Endothelial cell of umbilical vein (primary cell): ENCODE measurements at regions of chr21 and their contacts with region 1.

Region 1: DNA sequence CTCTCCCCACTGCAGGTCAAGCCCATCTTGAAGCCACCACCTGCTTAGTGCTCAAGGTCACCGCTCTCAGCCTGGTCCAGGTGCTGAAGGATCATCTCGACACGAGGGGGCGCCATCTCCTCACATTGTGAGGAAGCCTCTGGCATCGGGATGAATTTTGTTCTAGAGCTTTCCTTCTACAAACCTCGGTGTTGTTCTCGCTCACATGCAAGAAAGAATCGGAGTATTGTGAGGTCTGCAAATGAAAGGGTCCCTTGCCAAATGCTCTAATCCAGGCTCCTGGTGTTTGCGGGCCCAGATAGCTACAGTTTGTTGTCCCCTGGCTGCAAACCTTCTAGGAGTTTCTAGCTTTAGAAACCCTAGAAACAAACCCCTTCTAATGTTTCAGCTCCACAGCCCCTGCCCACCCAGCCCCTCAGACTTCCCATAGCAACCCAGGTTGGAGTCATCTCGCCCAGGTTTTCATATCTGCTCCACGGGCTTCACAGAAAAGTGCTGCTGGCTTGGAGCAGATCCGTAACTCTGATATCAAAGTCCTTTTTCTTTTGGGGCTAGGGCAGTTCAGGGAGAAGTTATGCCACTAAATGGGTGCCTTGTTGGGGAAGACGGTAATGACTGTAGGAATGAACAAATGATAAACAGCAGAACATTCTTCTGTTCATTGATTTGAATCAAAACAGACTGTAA is 8.6 kb upstream of the ATP5PO start:
- DNase-seq: peak; percentile 78
- H3K4me3 ChIP-seq: no peak overlapping the region
- H3K27ac ChIP-seq: no peak overlapping the region
- H3K4me1 ChIP-seq: no peaks in the 10 kb centered on the region
- H3K27me3 ChIP-seq: peaks cover 5 to 6% of the 10 kb centered on the region in 2 experiments
- CTCF ChIP-seq: peak; percentile 85 to 86
- POLR2A ChIP-seq: no peak

Region 2: DNA sequence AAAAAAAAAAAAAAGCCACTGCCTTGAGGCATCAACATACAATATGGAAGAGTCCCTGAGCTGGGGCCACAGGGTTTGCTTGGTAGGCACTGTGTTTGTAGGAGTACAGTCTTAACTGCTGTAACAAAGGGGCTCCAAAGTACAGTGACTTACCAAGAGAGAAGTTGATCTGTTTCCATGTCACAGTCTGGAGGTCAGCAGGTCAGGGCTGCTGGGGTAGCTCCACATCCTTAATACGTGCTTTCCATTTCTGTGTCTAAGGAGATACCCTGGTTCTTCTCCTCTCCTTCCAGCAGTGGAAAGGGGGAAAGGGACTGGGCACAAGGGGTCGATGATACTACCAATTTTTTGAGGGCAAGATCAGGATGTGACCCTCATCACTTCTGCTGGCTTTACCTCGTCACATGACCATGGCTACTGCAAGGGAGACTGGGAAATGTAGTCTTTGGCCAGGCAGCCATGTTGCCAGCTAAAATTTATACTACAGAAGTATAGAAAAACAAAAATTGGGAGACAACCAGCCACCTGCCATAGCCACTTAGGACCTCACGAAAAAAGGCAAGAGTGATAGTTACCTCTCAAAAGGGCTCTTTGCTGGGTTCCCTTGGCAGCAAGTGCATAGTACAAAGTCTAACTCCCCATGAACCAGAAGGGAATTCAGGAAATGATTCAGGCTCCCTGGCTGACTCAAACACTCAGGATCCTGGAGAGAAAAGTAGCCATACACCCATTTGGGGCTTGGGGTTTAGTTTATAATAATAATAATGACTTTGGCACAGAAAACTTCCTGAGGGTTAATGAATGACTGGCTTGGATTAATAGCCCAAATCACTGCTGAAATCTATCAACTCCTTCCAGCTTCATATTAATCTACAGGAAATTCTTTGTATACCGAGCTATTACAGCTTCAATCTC is 44.1 kb after region 1 on chr21:
- CTCF ChIA-PET with region 1: interaction called, 38 read pairs
- POLR2A ChIA-PET with region 1: interaction called, 3 read pairs
- dilution Hi-C with region 1: no loop called
- intact Hi-C with region 1: no loop called
- DNase-seq: peak; percentile 97
- H3K4me3 ChIP-seq: peak overlapping the region in 1 of 3 experiments; percentile 10
- H3K27ac ChIP-seq: peak overlapping the region; percentile 84
- H3K4me1 ChIP-seq: peaks cover 36% of the 10 kb centered on the region
- H3K27me3 ChIP-seq: peaks cover 0 to 3% of the 10 kb centered on the region in 2 experiments
- CTCF ChIP-seq: no peak
- POLR2A ChIP-seq: no peak

Region 3: GRCh38 chr21:34091607-34092006 is 167.4 kb after region 1 on chr21:
- CTCF ChIA-PET with region 1: interaction called, 30 read pairs
- POLR2A ChIA-PET with region 1: no interaction called
- dilution Hi-C with region 1: no loop called
- intact Hi-C with region 1: loop called (anchors 5 kb)
- DNase-seq: peak; percentile 16
- H3K4me3 ChIP-seq: no peak overlapping the region
- H3K27ac ChIP-seq: no peak overlapping the region
- H3K4me1 ChIP-seq: peaks cover 16% of the 10 kb centered on the region
- H3K27me3 ChIP-seq: no peaks in the 10 kb centered on the region
- CTCF ChIP-seq: peak; percentile 20 to 27
- POLR2A ChIP-seq: no peak

Region 4: DNA sequence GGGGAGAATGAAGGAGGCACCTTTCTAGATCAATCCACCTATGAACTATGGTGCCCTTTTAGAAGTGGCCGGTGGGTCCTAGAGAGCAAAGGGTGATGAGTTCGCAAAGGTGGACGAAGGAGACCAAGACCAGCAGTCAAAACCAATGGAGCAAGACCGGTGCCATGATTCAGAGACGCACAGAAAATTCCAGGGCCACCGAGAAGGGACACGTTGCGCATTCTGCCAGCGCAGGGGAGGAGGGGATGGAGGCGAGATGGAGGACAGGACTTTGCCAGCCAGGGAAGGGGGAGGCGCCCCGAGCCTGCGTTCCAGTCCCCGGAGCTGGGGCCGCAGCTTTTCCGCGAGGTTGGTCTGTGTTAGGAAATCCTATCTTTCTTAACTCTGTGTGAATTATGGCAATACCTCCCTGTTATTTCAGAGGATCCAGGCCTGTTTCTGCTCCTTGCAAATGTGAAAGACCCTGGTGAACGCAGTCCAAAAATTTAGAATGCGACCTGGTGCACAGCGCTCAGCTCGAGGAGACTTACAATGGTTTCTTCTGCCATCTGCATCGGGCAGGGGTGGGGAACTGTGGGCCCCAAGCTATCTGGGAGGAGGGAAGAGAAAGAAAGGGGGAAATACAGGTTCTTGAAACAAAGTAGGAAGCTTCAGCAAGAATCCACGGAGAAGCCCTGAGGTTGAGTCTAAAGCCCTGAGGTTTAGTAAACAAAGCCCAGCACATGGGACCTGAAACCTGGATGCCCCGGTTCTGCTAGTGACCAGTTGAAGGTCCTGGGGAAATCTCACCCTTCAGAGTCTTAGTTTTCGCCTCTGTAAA is 278.5 kb after region 1 on chr21:
- CTCF ChIA-PET with region 1: interaction called, 218 read pairs
- POLR2A ChIA-PET with region 1: no interaction called
- dilution Hi-C with region 1: no loop called
- intact Hi-C with region 1: loop called (anchors 1 kb)
- DNase-seq: no peak
- H3K4me3 ChIP-seq: peak overlapping the region in 1 of 3 experiments; percentile 46
- H3K27ac ChIP-seq: no peak overlapping the region
- H3K4me1 ChIP-seq: peaks cover 6% of the 10 kb centered on the region
- H3K27me3 ChIP-seq: peaks cover 0 to 7% of the 10 kb centered on the region in 2 experiments
- CTCF ChIP-seq: no peak
- POLR2A ChIP-seq: no peak

Region 5: DNA sequence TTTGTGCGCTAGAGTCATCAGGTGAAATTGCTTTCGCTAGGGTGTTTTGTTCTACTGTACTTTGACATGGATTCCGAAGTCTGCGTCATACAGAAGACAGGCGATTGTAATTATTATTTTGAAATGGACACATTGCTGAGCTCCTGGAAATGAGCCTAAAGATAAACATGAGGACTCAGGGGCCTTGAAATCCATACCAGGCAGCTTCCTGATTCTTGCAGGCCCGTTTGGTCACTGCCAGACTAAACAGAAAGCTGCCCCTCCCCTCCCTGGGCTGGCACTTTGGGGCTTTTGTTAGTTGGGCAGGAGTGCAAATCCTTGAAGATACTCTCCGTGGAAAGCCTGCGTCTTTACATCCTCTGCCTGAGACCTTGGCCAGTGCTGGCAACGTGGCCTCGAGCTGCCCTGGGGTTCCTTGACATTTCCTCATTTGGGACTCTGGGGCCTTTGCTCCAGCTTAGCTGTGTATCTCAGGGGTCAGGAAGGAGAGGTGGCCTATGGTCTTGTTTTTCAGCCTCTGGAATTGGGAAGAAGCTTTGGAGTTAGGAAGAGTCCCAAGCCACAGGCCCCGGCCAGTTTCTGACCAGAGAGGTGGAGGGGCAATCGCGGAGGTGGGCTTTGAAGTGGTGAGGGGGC is 412.7 kb after region 1 on chr21:
- CTCF ChIA-PET with region 1: interaction called, 867 read pairs
- POLR2A ChIA-PET with region 1: no interaction called
- dilution Hi-C with region 1: no loop called
- intact Hi-C with region 1: no loop called
- DNase-seq: peak; percentile 48
- H3K4me3 ChIP-seq: no peak overlapping the region
- H3K27ac ChIP-seq: no peak overlapping the region
- H3K4me1 ChIP-seq: peaks cover 10% of the 10 kb centered on the region
- H3K27me3 ChIP-seq: peaks cover 0 to 2% of the 10 kb centered on the region in 2 experiments
- CTCF ChIP-seq: no peak
- POLR2A ChIP-seq: no peak